ENCODE measurements at regions of chr22 and their contacts with region 1.

Region 1: DNA sequence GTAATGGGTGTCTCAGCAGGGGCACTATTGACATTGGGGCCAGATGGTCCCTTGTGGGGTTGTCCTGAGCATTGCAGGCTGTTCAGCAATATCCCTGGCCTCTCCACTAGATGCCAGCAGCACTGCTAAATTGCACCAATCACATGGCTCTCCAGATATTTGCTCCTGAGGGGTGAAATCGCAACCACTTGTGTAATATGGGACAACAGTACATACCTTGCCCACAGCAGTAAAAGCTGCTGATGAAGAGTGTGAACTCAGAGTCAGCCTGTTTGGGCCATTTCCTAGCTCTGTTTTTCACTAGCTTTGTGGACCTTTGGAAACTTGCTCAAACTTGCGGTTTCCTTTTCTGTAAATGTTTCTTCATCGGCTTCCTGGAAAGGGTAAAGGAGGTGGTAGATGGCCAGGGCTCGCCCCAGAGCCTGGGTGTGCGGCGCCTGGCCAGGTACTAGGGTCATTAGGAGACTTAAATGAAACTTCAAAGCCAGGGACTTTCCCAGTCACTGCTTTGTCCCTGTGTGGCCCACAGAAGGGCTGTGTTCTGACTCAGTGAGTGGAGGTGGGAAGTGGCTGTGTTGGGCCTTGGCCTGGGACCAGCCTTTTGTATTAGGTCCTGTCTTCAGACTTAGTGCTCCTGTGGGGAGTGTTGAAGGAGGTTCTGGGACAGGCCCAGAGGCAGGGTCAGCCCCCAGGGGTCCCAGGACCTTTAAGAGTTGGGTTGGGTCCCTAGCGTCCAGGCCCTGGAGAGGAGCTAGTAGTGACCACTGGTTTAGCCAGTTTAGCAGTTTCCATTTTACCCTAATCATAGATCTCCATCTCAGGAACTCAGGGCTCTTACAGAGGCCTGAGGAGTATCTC is 13.1 kb downstream of the NCF4 start:
- DNase-seq: peak; percentile 91

Region 2: DNA sequence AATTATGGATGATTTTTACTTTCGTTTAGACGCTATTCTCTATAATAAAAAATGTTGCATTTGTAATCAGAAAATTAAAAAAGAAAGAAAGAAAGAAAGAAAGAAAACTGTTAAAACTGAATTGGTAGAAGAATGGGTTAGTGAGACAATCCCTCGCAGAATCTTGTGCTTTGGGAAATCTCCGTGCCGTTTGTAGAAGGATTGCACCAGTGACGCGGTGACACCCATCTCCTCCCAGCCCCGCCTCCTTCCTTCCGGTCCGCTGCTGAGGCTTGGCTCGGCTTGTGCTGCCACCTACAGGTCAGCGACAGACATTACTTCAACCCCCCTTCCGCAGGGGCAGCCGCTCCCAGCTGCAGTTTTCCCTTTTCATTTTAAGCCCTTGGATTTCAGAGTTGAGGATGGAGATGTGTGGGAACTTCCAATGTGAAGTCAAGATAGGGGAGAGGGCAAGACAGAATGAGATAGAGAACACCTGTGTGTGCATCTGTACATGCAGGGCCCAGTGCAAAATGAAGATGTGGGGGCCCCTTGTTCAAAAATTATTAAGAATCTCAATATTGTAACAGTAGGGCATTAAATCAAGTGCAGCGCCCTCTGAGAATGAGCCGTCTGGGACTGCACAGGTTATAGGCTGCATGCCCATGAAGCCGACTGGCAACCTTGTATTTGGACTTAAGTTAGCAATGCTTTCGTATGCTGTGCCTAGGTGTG is 104.2 kb after region 1 on chr22:
- intact Hi-C with region 1: loop called (anchors 5 kb)
- DNase-seq: peak; percentile 97

Region 3: DNA sequence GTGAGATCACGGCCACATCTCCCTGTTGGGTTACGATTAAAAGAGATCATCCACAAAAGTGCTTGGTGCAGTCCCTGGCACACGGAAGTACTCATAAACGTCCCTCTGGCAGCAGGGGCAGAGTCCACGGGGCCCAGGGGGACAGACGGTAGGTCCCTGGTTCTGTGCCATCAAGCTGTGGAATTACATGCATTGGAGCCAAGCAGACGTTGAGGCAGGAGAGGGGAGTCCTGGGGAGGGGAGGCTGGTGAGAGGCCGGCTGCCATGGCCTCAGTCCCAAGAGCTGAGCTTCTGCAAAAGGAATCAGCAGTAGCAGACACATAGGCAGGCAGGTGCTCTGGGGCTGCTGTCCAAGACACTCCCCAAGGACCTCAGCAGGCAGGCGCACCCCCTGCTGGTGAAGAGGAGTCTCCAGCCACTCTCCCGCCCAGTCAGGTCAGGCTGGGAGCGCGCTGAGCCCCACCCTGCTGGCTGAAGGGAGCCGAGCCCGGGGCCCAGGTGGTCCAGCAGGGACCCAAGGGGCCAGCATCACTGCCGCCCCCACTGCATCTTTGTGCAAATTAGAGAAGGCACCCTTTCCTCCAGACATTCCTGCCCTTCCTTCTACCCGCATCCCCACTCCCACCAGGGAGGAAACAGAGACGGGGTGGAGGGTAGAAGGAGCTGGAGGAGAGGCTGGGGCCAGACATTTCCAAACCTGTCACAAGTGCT is 170.1 kb after region 1 on chr22:
- intact Hi-C with region 1: loop called (anchors 5 kb)
- DNase-seq: peak; percentile 82